ENCODE measurements at regions of chr6 and their contacts with region 1.

Region 1: DNA sequence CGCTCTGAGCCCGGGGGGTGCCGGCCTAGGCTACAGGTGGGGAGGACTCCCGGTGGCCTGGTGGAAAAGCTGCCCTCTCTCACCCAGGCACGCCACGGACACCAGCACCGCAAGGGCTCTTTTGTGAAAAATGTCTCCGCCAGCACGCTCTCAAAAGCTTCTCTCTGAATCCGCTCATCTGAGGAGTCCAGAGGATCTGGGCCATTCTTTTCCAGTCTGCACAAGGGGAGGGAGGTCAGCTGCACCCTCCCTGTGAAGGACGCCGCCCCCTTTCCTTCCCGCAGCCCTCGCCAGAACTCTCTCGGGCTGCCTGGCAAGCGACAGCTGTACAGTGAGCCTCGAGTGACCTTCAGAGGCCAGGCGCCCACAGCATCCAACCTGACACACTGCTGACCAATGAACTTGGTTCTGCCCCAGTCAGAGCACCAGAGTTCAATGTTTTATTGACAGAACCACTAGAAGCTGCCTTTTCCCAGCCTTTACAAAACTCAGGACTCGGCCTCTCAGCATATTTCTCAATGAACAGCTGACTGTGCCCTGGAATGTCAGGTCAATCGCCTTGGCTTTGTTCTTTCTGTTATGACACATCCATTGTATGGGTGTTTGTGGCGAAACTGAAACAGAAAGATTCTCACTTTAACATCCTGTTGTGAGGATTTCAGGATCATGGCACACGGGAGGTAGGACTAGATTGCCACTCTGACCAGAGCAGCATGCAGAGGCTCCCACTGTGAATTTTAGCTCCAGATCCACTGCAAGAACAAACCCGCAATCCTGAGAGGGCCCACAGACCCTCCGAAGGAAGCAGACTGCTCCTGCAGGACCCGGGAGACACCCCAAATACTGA is 26.7 kb downstream of the SERPINB9 start:
- DNase-seq: peak in 1 of 5 donors; percentile 20
- H3K4me3 ChIP-seq: peak overlapping the region; percentile 14 to 47
- H3K4me3 Mint-ChIP-seq: peak overlapping the region; percentile 68 to 89 (median 86)
- H3K27ac ChIP-seq: peak overlapping the region; percentile 72
- H3K27ac Mint-ChIP-seq: peak overlapping the region; percentile 89 to 96 (median 95)
- H3K4me1 ChIP-seq: peaks cover 70% of the 10 kb centered on the region
- H3K4me1 Mint-ChIP-seq: peaks cover 66 to 87% (median 76%) of the 10 kb centered on the region in 4 donors
- H3K27me3 ChIP-seq: no peaks in the 10 kb centered on the region
- H3K27me3 Mint-ChIP-seq: no peaks in the 10 kb centered on the region

Region 2: GRCh38 chr6:1930356-1930755 is 946.1 kb before region 1 on chr6:
- CTCF ChIA-PET with region 1: no interaction called
- POLR2A ChIA-PET with region 1: no interaction called
- intact Hi-C with region 1: no loop called
- DNase-seq: no peak
- H3K4me3 ChIP-seq: no peak overlapping the region
- H3K4me3 Mint-ChIP-seq: no peak overlapping the region
- H3K27ac ChIP-seq: no peak overlapping the region
- H3K27ac Mint-ChIP-seq: no peak overlapping the region
- H3K4me1 ChIP-seq: no peaks in the 10 kb centered on the region
- H3K4me1 Mint-ChIP-seq: no peaks in the 10 kb centered on the region
- H3K27me3 ChIP-seq: no peaks in the 10 kb centered on the region
- H3K27me3 Mint-ChIP-seq: no peaks in the 10 kb centered on the region

Region 3: GRCh38 chr6:2866181-2866846 is 10.1 kb before region 1 on chr6:
- CTCF ChIA-PET with region 1: interaction called, 13 read pairs
- POLR2A ChIA-PET with region 1: interaction called, 3 read pairs
- intact Hi-C with region 1: no loop called
- DNase-seq: no peak
- H3K4me3 ChIP-seq: no peak overlapping the region
- H3K4me3 Mint-ChIP-seq: no peak overlapping the region
- H3K27ac ChIP-seq: no peak overlapping the region
- H3K27ac Mint-ChIP-seq: peak overlapping the region in 1 of 7 donors; percentile 48
- H3K4me1 ChIP-seq: peaks cover 36% of the 10 kb centered on the region
- H3K4me1 Mint-ChIP-seq: peaks cover 34 to 67% (median 48%) of the 10 kb centered on the region in 4 donors
- H3K27me3 ChIP-seq: no peaks in the 10 kb centered on the region
- H3K27me3 Mint-ChIP-seq: no peaks in the 10 kb centered on the region

Region 4: DNA sequence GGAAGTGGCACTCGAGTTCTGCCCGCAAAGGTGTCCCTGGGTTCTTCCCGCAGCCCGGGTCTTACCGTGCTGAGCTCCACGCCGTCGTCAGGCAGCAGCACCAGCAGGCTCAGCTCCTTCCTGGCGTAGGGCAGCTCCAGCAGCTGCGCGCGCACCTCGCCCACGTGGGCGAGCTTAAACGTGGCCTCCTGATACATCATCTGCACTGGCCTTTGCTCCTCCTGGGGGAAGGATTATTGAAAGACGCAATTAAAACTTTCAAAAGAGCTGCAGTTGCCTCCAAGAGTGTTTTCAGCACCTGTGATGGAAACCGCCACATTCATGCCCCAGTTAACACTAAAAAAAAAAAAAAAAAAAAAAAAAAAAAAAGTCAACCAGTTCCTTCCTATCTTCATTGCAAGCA is 15.3 kb after region 1 on chr6:
- CTCF ChIA-PET with region 1: interaction called, 9 read pairs
- POLR2A ChIA-PET with region 1: interaction called, 3 read pairs
- intact Hi-C with region 1: loop called (anchors 1 kb)
- DNase-seq: peak; percentile 79 to 94 (median 85)
- H3K4me3 ChIP-seq: no peak overlapping the region
- H3K4me3 Mint-ChIP-seq: peak overlapping the region; percentile 77 to 88 (median 81)
- H3K27ac ChIP-seq: peak overlapping the region; percentile 49
- H3K27ac Mint-ChIP-seq: peak overlapping the region; percentile 91 to 96 (median 95)
- H3K4me1 ChIP-seq: peaks cover 55% of the 10 kb centered on the region
- H3K4me1 Mint-ChIP-seq: peaks cover 40 to 75% (median 60%) of the 10 kb centered on the region in 4 donors
- H3K27me3 ChIP-seq: no peaks in the 10 kb centered on the region
- H3K27me3 Mint-ChIP-seq: no peaks in the 10 kb centered on the region

Region 5: GRCh38 chr6:2900821-2901644 is 24.6 kb after region 1 on chr6:
- CTCF ChIA-PET with region 1: interaction called, 30 read pairs
- POLR2A ChIA-PET with region 1: interaction called, 9 read pairs
- intact Hi-C with region 1: loop called (anchors 2 kb)
- DNase-seq: peak in 1 of 5 donors; percentile 22
- H3K4me3 ChIP-seq: peak overlapping the region; percentile 42 to 92
- H3K4me3 Mint-ChIP-seq: peak overlapping the region; percentile 99 to 100 (median 99)
- H3K27ac ChIP-seq: peak overlapping the region; percentile 82
- H3K27ac Mint-ChIP-seq: peak overlapping the region; percentile 91 to 99 (median 98)
- H3K4me1 ChIP-seq: peaks cover 57% of the 10 kb centered on the region
- H3K4me1 Mint-ChIP-seq: peaks cover 44 to 66% (median 54%) of the 10 kb centered on the region in 4 donors
- H3K27me3 ChIP-seq: no peaks in the 10 kb centered on the region
- H3K27me3 Mint-ChIP-seq: no peaks in the 10 kb centered on the region

Region 6: GRCh38 chr6:2940010-2940850 is 63.8 kb after region 1 on chr6:
- CTCF ChIA-PET with region 1: interaction called, 3 read pairs
- POLR2A ChIA-PET with region 1: interaction called, 11 read pairs
- intact Hi-C with region 1: no loop called
- DNase-seq: peak; percentile 76 to 93 (median 80)
- H3K4me3 ChIP-seq: peak overlapping the region; percentile 58 to 59
- H3K4me3 Mint-ChIP-seq: peak overlapping the region; percentile 79 to 95 (median 90)
- H3K27ac ChIP-seq: peak overlapping the region; percentile 61
- H3K27ac Mint-ChIP-seq: peak overlapping the region; percentile 89 to 99 (median 96)
- H3K4me1 ChIP-seq: peaks cover 81% of the 10 kb centered on the region
- H3K4me1 Mint-ChIP-seq: peaks cover 49 to 73% (median 60%) of the 10 kb centered on the region in 4 donors
- H3K27me3 ChIP-seq: no peaks in the 10 kb centered on the region
- H3K27me3 Mint-ChIP-seq: no peaks in the 10 kb centered on the region

Measured in CD4-positive, alpha-beta memory T cell (primary cell).